MCF 10A (cell line): ENCODE measurements at regions of chr5 and their contacts with region 1.

Region 1: DNA sequence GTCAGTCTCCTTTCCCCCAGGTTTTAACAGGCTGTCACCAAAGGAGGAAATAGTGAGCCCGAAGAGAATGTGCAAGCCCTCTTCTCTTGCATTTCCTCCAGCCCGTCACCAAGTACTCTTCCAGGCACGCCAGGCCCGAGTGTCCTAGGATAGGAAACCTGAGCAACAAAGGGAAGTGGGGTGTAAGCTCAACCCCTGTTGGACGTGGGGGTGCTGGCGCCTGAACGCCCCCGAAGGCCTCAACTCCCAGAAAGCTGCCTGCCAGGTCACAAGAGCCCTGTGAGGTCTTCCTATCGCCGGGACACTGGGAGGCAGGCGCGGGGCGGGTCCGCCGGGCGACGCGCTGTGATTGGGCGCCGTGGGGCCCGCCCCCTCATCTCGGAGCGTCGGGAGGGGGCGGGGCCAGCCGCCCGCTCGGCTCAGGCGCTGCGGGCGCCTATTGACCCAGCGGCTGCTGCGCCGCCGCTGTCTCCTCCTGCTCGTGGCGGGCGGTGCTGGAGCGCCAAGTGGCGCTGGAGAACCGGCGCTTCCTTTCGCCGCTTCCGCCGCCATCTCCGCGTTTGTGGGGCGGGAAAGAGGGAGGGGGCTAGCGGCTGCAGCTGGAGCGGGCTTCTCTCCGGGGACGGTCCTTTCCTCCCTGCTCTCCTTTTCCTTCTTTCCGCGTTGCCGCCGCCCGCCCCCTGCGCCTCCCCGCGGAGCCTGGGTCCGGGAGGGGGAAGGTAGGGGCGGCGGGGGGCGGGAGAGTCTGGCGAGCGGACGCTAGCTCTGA is 572 bp upstream of the MAN2A1 start:
- DNase-seq: peak; percentile 91
- H3K4me3 Mint-ChIP-seq: peak overlapping the region; percentile 94
- H3K27ac Mint-ChIP-seq: peak overlapping the region; percentile 88
- H3K4me1 Mint-ChIP-seq: peaks cover 26% of the 10 kb centered on the region
- H3K27me3 Mint-ChIP-seq: no peaks in the 10 kb centered on the region
- CTCF ChIP-seq: no peak

Region 2: GRCh38 chr5:109739741-109740728 is 50.9 kb after region 1 on chr5:
- CTCF ChIA-PET with region 1: interaction called, 3 read pairs
- POLR2A ChIA-PET with region 1: interaction called, 4 read pairs
- intact Hi-C with region 1: loop called (anchors 5 kb)
- DNase-seq: peak; percentile 43
- H3K4me3 Mint-ChIP-seq: peak overlapping the region; percentile 21
- H3K27ac Mint-ChIP-seq: peak overlapping the region; percentile 60
- H3K4me1 Mint-ChIP-seq: peaks cover 32% of the 10 kb centered on the region
- H3K27me3 Mint-ChIP-seq: no peaks in the 10 kb centered on the region
- CTCF ChIP-seq: no peak

Region 3: GRCh38 chr5:109844148-109844547 is 155.0 kb after region 1 on chr5:
- CTCF ChIA-PET with region 1: no interaction called
- POLR2A ChIA-PET with region 1: interaction called, 4 read pairs
- intact Hi-C with region 1: loop called (anchors 2 kb)
- DNase-seq: no peak
- H3K4me3 Mint-ChIP-seq: no peak overlapping the region
- H3K27ac Mint-ChIP-seq: no peak overlapping the region
- H3K4me1 Mint-ChIP-seq: peaks cover 6% of the 10 kb centered on the region
- H3K27me3 Mint-ChIP-seq: no peaks in the 10 kb centered on the region
- CTCF ChIP-seq: peak; percentile 39

Region 4: DNA sequence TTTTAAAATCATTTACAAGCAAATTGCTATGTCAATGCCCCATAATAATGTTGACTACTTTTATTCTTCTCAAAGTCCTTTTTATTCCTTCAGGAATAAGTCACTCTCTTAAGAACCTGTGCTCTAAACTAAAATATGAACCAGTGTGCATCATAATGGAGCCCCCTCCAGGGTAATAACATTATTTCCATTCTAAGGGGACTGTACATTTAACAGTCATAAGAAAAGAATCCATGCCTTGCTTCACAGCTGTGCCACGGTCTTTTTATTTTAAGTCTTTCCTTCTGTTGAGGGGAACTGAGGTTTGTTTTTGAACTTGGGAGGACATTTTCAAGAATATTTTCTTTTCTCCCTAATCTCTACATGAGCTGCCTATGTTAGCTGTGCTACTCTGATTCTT is 298.2 kb after region 1 on chr5:
- CTCF ChIA-PET with region 1: no interaction called
- POLR2A ChIA-PET with region 1: no interaction called
- intact Hi-C with region 1: no loop called
- DNase-seq: no peak
- H3K4me3 Mint-ChIP-seq: no peak overlapping the region
- H3K27ac Mint-ChIP-seq: peak overlapping the region; percentile 65
- H3K4me1 Mint-ChIP-seq: peaks cover 18% of the 10 kb centered on the region
- H3K27me3 Mint-ChIP-seq: no peaks in the 10 kb centered on the region
- CTCF ChIP-seq: no peak

Region 5: GRCh38 chr5:110086658-110087388 is 397.7 kb after region 1 on chr5:
- CTCF ChIA-PET with region 1: interaction called, 5 read pairs
- POLR2A ChIA-PET with region 1: interaction called, 10 read pairs
- intact Hi-C with region 1: no loop called
- DNase-seq: peak; percentile 97
- H3K4me3 Mint-ChIP-seq: peak overlapping the region; percentile 59
- H3K27ac Mint-ChIP-seq: peak overlapping the region; percentile 92
- H3K4me1 Mint-ChIP-seq: peaks cover 18% of the 10 kb centered on the region
- H3K27me3 Mint-ChIP-seq: no peaks in the 10 kb centered on the region
- CTCF ChIP-seq: no peak

Region 6: DNA sequence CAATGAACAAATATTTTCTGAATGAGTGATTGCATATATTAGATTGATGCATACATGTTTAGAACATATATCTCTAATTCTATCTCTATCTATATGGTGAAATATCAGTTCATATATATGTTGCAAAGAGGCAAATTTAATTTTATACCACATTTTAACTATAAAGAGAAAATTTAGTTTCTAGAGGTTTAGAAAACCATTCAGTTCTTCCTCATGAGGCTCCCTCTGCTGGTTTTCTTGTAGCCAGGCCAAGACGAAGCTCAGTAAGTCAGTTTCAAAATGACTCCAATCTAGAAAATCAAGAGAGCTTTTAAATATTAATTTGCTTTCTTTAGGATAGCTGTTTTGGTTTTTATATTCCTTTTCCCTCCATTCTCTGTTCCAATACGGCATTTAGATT is 725.2 kb after region 1 on chr5:
- CTCF ChIA-PET with region 1: no interaction called
- POLR2A ChIA-PET with region 1: no interaction called
- intact Hi-C with region 1: loop called (anchors 10 kb)
- DNase-seq: peak; percentile 21
- H3K4me3 Mint-ChIP-seq: no peak overlapping the region
- H3K27ac Mint-ChIP-seq: no peak overlapping the region
- H3K4me1 Mint-ChIP-seq: no peaks in the 10 kb centered on the region
- H3K27me3 Mint-ChIP-seq: no peaks in the 10 kb centered on the region
- CTCF ChIP-seq: peak; percentile 21

Region 7: GRCh38 chr5:110625376-110625999 is 936.3 kb after region 1 on chr5:
- CTCF ChIA-PET with region 1: interaction called, 5 read pairs
- POLR2A ChIA-PET with region 1: interaction called, 4 read pairs
- intact Hi-C with region 1: loop called (anchors 2 kb)
- DNase-seq: peak; percentile 36
- H3K4me3 Mint-ChIP-seq: no peak overlapping the region
- H3K27ac Mint-ChIP-seq: no peak overlapping the region
- H3K4me1 Mint-ChIP-seq: no peaks in the 10 kb centered on the region
- H3K27me3 Mint-ChIP-seq: peaks cover 24% of the 10 kb centered on the region
- CTCF ChIP-seq: no peak